Ascending aorta (tissue), 2 donors: ENCODE measurements at regions of chr5 and their contacts with region 1.

Region 1: DNA sequence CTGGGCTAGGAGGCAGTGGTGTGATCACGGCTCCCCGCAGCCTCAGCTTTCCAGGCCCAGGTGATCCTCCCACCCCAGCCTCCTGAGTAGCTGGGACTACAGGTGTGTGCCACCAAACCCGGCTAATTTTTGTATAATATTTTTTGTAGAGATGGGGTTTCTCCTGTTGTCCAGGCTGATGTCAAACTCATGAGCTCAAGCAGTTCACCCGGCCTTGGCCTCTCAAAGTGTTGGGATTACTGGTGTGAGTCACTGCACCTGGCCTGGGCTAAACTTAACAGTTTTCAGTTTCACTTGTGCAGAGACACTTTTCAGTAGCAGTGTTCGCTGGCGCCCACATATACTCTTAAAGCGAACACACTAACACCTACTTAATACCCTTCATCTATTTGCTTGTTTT is 205.6 kb upstream of the ZNF608 start:
- DNase-seq: no peak
- H3K4me3 ChIP-seq: no peak overlapping the region
- H3K27ac ChIP-seq: no peak overlapping the region
- H3K4me1 ChIP-seq: peaks cover 0 to 7% of the 10 kb centered on the region in 2 donors
- H3K27me3 ChIP-seq: no peaks in the 10 kb centered on the region
- CTCF ChIP-seq: no peak

Region 2: GRCh38 chr5:124649491-124650146 is 302.5 kb before region 1 on chr5:
- intact Hi-C with region 1: loop called (anchors 5 kb)
- DNase-seq: peak; percentile 46 to 78
- H3K4me3 ChIP-seq: peak overlapping the region; percentile 19 to 55
- H3K27ac ChIP-seq: peak overlapping the region in 1 of 2 donors; percentile 38
- H3K4me1 ChIP-seq: peaks cover 6 to 10% of the 10 kb centered on the region in 2 donors
- H3K27me3 ChIP-seq: no peaks in the 10 kb centered on the region
- CTCF ChIP-seq: no peak

Region 3: GRCh38 chr5:124895236-124895635 is 56.8 kb before region 1 on chr5:
- intact Hi-C with region 1: no loop called
- DNase-seq: no peak
- H3K4me3 ChIP-seq: no peak overlapping the region
- H3K27ac ChIP-seq: no peak overlapping the region
- H3K4me1 ChIP-seq: no peaks in the 10 kb centered on the region
- H3K27me3 ChIP-seq: no peaks in the 10 kb centered on the region
- CTCF ChIP-seq: no peak

Region 4: GRCh38 chr5:124908581-124909451 is 43.3 kb before region 1 on chr5:
- intact Hi-C with region 1: loop called (anchors 2 kb)
- DNase-seq: no peak
- H3K4me3 ChIP-seq: no peak overlapping the region
- H3K27ac ChIP-seq: no peak overlapping the region
- H3K4me1 ChIP-seq: peaks cover 4 to 13% of the 10 kb centered on the region in 2 donors
- H3K27me3 ChIP-seq: no peaks in the 10 kb centered on the region
- CTCF ChIP-seq: no peak

Region 5: GRCh38 chr5:125607018-125607417 is 654.9 kb after region 1 on chr5:
- intact Hi-C with region 1: no loop called
- DNase-seq: no peak
- H3K4me3 ChIP-seq: no peak overlapping the region
- H3K27ac ChIP-seq: no peak overlapping the region
- H3K4me1 ChIP-seq: no peaks in the 10 kb centered on the region
- H3K27me3 ChIP-seq: no peaks in the 10 kb centered on the region
- CTCF ChIP-seq: no peak